Endothelial cell of umbilical vein (primary cell): ENCODE measurements at regions of chr12 and their contacts with region 1.

Region 1: GRCh38 chr12:98424726-98425401 is 90.5 kb upstream of the TMPO start:
- DNase-seq: peak; percentile 94
- H3K4me3 ChIP-seq: peak overlapping the region in 1 of 3 experiments; percentile 14
- H3K27ac ChIP-seq: peak overlapping the region; percentile 54
- H3K4me1 ChIP-seq: peaks cover 15% of the 10 kb centered on the region
- H3K27me3 ChIP-seq: no peaks in the 10 kb centered on the region
- CTCF ChIP-seq: peak; percentile 65 to 68
- POLR2A ChIP-seq: no peak

Region 2: DNA sequence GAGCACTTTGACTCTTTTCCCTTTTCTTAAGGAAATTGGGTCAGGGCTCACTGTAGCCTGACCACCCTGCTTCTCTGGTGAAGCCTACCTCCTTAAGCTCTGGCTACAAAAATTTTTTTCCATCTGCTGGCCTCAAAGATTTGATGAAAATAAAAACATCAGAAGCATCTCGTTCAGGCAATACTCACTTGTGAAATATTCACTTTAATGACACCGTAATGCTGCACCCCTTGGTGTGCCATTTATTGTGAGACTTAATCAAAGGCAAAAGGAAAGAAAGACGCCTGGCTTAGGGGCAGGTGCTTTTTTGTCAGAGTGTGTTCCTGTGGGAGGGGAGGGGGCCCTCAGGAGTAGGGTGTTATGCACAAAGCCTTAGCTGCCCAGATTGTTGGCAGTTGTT is 64.5 kb before region 1 on chr12:
- CTCF ChIA-PET with region 1: no interaction called
- POLR2A ChIA-PET with region 1: no interaction called
- dilution Hi-C with region 1: no loop called
- intact Hi-C with region 1: no loop called
- DNase-seq: no peak
- H3K4me3 ChIP-seq: no peak overlapping the region
- H3K27ac ChIP-seq: no peak overlapping the region
- H3K4me1 ChIP-seq: no peaks in the 10 kb centered on the region
- H3K27me3 ChIP-seq: peaks cover 0 to 2% of the 10 kb centered on the region in 2 experiments
- CTCF ChIP-seq: no peak
- POLR2A ChIP-seq: no peak

Region 3: GRCh38 chr12:98439981-98440581 is 15.2 kb after region 1 on chr12:
- CTCF ChIA-PET with region 1: interaction called, 50 read pairs
- POLR2A ChIA-PET with region 1: no interaction called
- dilution Hi-C with region 1: no loop called
- intact Hi-C with region 1: loop called (anchors 1 kb)
- DNase-seq: peak; percentile 95
- H3K4me3 ChIP-seq: peak overlapping the region in 1 of 3 experiments; percentile 21
- H3K27ac ChIP-seq: peak overlapping the region; percentile 88
- H3K4me1 ChIP-seq: peaks cover 18% of the 10 kb centered on the region
- H3K27me3 ChIP-seq: no peaks in the 10 kb centered on the region
- CTCF ChIP-seq: no peak
- POLR2A ChIP-seq: no peak

Region 4: DNA sequence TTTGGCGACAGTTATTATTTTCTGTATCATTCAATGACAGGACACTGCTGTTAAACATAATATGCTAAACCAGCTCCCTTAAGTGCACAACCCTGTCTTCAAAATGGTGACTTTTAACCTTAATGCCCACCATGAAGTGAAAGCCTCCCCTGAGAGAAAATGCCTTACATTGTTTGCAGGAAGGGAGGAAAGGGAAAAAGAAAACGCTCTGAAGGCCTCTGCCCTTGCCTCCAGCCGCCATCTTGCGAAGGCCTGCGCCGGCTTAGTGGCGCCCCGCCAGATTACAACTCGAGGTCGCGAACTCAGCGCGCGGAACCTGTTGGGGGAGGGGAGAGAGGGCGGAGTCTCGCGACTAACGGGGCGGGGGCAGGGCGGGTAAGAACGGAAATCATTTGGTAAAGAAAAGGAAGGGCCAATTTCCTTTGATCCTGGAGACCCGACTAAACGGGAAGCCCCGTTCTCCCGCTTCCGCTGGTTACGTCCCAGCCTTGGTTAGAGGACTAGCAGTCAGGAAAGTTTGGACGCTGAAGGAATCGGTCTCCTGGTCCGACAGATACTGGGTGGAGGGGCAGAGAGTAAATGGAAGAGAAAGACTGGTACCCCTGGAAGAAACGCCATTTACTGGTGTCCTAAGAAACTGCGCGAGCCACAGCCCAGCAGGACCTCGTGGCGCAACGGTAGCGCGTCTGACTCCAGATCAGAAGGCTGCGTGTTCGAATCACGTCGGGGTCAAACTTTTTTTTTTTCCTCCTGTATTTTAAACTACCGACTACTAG is 78.9 kb after region 1 on chr12:
- CTCF ChIA-PET with region 1: interaction called, 5 read pairs
- POLR2A ChIA-PET with region 1: no interaction called
- dilution Hi-C with region 1: no loop called
- intact Hi-C with region 1: loop called (anchors 1 kb)
- DNase-seq: peak; percentile 95
- H3K4me3 ChIP-seq: peak overlapping the region in 2 of 3 experiments; percentile 50 to 83
- H3K27ac ChIP-seq: peak overlapping the region; percentile 93
- H3K4me1 ChIP-seq: peaks cover 2% of the 10 kb centered on the region
- H3K27me3 ChIP-seq: no peaks in the 10 kb centered on the region
- CTCF ChIP-seq: no peak
- POLR2A ChIP-seq: peak; percentile 45

Region 5: DNA sequence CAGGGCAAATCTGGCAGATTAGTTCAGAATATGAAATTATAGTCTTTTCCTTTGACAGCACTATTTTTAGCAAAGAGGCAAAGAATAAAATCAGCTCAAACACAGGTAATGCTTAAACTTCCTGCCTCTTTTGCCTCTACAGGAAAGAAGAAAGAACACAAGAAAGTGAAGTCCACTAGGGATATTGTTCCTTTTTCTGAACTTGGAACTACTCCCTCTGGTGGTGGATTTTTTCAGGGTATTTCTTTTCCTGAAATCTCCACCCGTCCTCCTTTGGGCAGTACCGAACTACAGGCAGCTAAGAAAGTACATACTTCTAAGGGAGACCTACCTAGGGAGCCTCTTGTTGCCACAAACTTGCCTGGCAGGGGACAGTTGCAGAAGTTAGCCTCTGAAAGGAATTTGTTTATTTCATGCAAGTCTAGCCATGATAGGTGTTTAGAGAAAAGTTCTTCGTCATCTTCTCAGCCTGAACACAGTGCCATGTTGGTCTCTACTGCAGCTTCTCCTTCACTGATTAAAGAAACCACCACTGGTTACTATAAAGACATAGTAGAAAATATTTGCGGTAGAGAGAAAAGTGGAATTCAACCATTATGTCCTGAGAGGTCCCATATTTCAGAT is 107.9 kb after region 1 on chr12:
- CTCF ChIA-PET with region 1: interaction called, 18 read pairs
- POLR2A ChIA-PET with region 1: no interaction called
- dilution Hi-C with region 1: no loop called
- intact Hi-C with region 1: loop called (anchors 1 kb)
- DNase-seq: peak; percentile 51
- H3K4me3 ChIP-seq: no peak overlapping the region
- H3K27ac ChIP-seq: no peak overlapping the region
- H3K4me1 ChIP-seq: no peaks in the 10 kb centered on the region
- H3K27me3 ChIP-seq: no peaks in the 10 kb centered on the region
- CTCF ChIP-seq: peak; percentile 42 to 43
- POLR2A ChIP-seq: no peak

Region 6: DNA sequence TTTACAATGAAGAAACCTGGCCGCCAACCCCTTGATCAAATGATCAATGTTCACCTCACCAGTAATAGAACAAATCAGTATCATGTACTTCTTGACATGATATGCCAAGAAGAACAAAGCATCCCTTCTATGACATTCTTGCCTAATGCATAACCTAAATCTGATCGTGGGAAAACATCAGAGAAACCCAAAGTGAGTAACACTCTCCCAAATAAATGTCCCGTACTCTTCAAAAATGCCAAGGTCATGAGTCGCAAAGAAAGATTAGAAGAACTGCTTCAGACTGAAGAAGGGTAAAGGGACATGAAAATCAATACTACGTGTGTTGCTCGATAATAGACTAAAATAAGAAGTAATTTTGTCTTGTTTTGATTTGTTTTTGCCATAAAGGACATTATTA is 157.2 kb after region 1 on chr12:
- CTCF ChIA-PET with region 1: no interaction called
- POLR2A ChIA-PET with region 1: no interaction called
- dilution Hi-C with region 1: no loop called
- intact Hi-C with region 1: no loop called
- DNase-seq: no peak
- H3K4me3 ChIP-seq: no peak overlapping the region
- H3K27ac ChIP-seq: no peak overlapping the region
- H3K4me1 ChIP-seq: no peaks in the 10 kb centered on the region
- H3K27me3 ChIP-seq: no peaks in the 10 kb centered on the region
- CTCF ChIP-seq: no peak
- POLR2A ChIP-seq: no peak

Region 7: GRCh38 chr12:98653866-98654493 is 229.1 kb after region 1 on chr12:
- CTCF ChIA-PET with region 1: interaction called, 4 read pairs
- POLR2A ChIA-PET with region 1: no interaction called
- dilution Hi-C with region 1: no loop called
- intact Hi-C with region 1: loop called (anchors 1 kb)
- DNase-seq: peak; percentile 66
- H3K4me3 ChIP-seq: no peak overlapping the region
- H3K27ac ChIP-seq: no peak overlapping the region
- H3K4me1 ChIP-seq: peaks cover 4% of the 10 kb centered on the region
- H3K27me3 ChIP-seq: no peaks in the 10 kb centered on the region
- CTCF ChIP-seq: peak; percentile 30 to 36
- POLR2A ChIP-seq: no peak